ENCODE measurements at regions of chr4 and their contacts with region 1.

Region 1: DNA sequence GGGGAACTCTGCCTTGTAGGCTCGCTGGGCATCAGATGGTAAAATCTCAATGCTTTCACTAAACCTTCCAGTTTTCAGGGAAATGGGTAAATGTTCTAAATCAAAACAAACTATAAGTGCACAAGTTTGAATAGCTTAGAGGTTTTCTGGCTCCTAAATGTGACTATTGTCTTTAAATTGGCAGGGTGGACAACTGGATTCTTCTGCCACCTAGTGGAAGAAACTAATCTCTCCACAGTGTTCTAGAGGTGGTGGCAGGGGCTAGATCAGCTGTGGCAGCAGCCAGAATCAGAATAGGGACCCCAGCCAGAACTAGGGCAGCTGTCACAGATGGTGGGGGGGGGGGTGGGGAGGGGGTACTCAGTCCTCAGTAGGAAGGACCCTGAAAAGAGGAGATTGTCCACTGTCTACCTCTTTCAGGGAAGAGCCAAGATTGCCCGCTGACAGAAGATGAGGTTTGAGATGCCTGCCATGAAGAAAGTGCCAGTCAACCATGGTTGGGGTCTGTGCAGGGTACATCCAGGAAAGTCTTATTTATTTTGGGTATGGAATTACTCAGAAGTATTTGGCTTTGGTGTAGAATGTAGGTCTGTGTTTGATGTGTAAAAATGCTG is 201.4 kb downstream of the CCNG2 start:
- DNase-seq: peak; percentile 23
- H3K4me3 Mint-ChIP-seq: no peak overlapping the region
- H3K27ac Mint-ChIP-seq: no peak overlapping the region
- H3K4me1 Mint-ChIP-seq: no peaks in the 10 kb centered on the region
- H3K27me3 Mint-ChIP-seq: no peaks in the 10 kb centered on the region

Region 2: GRCh38 chr4:76511947-76512346 is 846.5 kb before region 1 on chr4:
- CTCF ChIA-PET with region 1: no interaction called
- intact Hi-C with region 1: loop called (anchors 5 kb)
- DNase-seq: no peak
- H3K4me3 Mint-ChIP-seq: no peak overlapping the region
- H3K27ac Mint-ChIP-seq: no peak overlapping the region
- H3K4me1 Mint-ChIP-seq: no peaks in the 10 kb centered on the region
- H3K27me3 Mint-ChIP-seq: peaks cover 2% of the 10 kb centered on the region

Region 3: GRCh38 chr4:77052352-77052751 is 306.1 kb before region 1 on chr4:
- CTCF ChIA-PET with region 1: no interaction called
- intact Hi-C with region 1: loop called (anchors 2 kb)
- DNase-seq: peak; percentile 81
- H3K4me3 Mint-ChIP-seq: no peak overlapping the region
- H3K27ac Mint-ChIP-seq: peak overlapping the region; percentile 50
- H3K4me1 Mint-ChIP-seq: no peaks in the 10 kb centered on the region
- H3K27me3 Mint-ChIP-seq: no peaks in the 10 kb centered on the region

Region 4: GRCh38 chr4:77146186-77147078 is 212.0 kb before region 1 on chr4:
- CTCF ChIA-PET with region 1: no interaction called
- intact Hi-C with region 1: no loop called
- DNase-seq: no peak
- H3K4me3 Mint-ChIP-seq: no peak overlapping the region
- H3K27ac Mint-ChIP-seq: no peak overlapping the region
- H3K4me1 Mint-ChIP-seq: peaks cover 16% of the 10 kb centered on the region
- H3K27me3 Mint-ChIP-seq: no peaks in the 10 kb centered on the region